ENCODE measurements at regions of chr3 and their contacts with region 1.

Region 1: DNA sequence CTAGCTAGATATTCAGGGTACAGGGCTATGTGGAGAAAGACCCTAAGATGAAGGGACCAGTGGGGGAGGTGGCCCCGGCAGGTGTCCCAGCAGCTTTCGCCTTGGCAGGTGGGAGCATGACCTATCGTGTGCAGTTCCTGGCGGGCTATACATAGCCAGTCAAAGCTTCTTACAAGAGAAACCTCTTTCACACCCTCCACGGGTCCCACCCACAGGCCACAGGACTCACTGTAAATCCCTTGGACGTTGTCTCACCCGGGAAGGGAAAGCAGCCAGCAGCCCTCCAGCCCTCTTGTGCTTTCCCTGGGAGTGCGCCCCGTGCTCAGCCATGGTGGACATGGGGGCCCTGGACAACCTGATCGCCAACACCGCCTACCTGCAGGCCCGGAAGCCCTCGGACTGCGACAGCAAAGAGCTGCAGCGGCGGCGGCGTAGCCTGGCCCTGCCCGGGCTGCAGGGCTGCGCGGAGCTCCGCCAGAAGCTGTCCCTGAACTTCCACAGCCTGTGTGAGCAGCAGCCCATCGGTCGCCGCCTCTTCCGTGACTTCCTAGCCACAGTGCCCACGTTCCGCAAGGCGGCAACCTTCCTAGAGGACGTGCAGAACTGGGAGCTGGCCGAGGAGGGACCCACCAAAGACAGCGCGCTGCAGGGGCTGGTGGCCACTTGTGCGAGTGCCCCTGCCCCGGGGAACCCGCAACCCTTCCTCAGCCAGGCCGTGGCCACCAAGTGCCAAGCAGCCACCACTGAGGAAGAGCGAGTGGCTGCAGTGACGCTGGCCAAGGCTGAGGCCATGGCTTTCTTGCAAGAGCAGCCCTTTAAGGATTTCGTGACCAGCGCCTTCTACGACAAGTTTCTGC is 15.0 kb downstream of the GRK7 start:
- DNase-seq: no peak
- H3K4me3 ChIP-seq: no peak overlapping the region
- CTCF ChIP-seq: no peak

Region 2: GRCh38 chr3:141812084-141812483 is 33.9 kb after region 1 on chr3:
- in situ Hi-C with region 1: no loop called
- DNase-seq: peak; percentile 74
- H3K4me3 ChIP-seq: no peak overlapping the region
- CTCF ChIP-seq: no peak

Region 3: GRCh38 chr3:141828487-141829268 is 50.5 kb after region 1 on chr3:
- in situ Hi-C with region 1: loop called (anchors 5 kb)
- DNase-seq: no peak
- H3K4me3 ChIP-seq: no peak overlapping the region
- CTCF ChIP-seq: no peak

Measured in astrocyte of the cerebellum (primary cell).